PC-9 (cell line): ENCODE measurements at regions of chr17 and their contacts with region 1.

Region 1: DNA sequence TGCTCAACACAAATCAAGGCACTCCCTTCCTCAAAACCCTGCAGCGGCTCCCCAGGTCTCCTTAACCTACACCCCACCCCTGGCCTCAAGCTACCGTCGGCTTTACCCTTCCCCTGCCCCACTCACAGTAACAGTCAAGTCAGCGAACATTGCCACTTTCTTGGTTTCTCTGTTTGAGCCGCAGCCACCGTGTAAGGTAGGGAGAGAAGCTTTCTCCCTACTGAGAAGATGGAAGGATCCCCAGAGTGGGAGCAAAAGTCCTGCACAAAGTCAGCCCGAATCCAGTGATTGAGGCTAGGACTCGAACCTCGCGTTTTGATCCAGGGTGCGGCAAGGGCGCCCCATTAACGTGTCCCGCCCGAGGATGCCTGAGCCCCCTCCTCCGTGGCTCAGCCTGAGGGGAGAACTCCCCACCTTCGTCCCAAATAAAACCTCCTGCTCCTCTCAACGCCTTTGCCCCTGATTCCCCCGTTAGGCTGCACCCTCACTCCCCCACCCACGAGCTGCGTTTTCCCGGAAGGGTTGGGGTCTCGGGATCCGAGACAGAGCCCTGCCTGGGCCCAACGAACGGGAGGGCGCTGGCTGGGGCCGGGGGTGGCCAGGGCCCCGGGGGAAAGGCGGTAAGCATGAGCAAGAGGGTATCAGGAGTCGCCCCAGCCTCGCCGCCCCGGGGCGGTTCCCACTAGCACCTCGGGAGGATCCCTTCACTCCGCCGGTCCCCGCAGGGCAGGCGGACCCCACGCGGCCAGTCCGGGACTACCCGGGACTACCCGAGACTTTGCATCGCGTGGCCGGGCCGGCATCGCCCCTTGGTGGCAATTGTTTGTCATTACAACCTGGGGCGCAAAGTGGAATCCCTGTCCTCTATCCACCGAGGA is 9.9 kb upstream of the NAGS start:
- DNase-seq: peak in 1 of 2 experiments; percentile 54
- H3K4me3 ChIP-seq: no peak overlapping the region; the same call in 1 of the 2 replicates
- H3K27ac ChIP-seq: no peak overlapping the region
- H3K4me1 ChIP-seq: no peaks in the 10 kb centered on the region
- H3K27me3 ChIP-seq: peaks cover 13% of the 10 kb centered on the region
- CTCF ChIP-seq: peak; percentile 90

Region 2: GRCh38 chr17:43790311-43790940 is 204.1 kb before region 1 on chr17:
- CTCF ChIA-PET with region 1: interaction called, 14 read pairs
- POLR2A ChIA-PET with region 1: no interaction called
- intact Hi-C with region 1: no loop called
- DNase-seq: no peak
- H3K4me3 ChIP-seq: no peak overlapping the region
- H3K27ac ChIP-seq: no peak overlapping the region
- H3K4me1 ChIP-seq: no peaks in the 10 kb centered on the region; the same call in 1 of the 2 replicates
- H3K27me3 ChIP-seq: peaks cover 12% of the 10 kb centered on the region; the same call in 1 of the 2 replicates
- CTCF ChIP-seq: peak; percentile 41; the same call in 1 of the 2 replicates

Region 3: DNA sequence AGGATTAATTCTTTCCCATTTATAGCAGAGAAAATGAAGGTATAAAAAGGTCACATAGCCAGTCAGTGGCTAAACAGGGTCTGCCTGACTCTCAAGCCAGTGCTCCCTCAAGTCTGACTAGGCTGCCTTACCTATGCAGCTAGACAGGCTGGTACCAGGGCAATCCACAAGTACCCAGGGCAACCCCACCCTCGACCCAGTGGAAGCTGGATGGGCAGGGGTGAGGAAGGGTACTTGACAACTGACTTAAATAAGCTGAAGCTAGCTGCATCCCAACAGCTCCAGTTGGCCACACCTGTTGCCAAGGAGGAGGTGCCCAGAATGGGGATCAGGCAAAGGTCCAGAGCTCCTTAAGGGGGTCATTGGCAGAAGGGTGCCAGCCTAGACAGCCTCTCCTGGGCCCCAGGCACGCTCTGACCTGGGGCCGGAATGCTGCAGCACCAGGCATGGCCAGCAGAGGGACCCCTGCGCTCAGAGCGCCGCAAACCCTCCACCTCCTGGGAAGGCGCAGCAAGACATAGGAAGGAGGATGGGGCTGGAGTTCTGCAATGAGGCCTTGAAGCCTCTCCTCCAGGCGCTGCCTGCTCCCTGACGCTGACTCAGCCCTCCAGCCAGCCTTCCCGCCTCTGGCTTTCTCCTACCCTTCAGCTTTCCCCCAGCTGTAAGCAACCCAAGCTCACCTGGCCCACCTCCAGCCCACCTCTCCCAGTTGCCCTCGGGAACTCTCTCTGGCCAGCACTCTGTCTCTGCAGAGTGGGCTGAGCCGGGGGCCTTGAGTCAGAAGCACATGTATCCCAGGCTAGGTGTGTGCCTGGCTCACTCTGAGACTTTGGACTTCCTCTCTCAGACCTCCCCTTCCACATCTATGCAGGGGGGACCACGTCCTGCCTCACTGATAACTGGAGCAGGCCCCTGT is 116.0 kb before region 1 on chr17:
- CTCF ChIA-PET with region 1: interaction called, 4 read pairs
- POLR2A ChIA-PET with region 1: no interaction called
- intact Hi-C with region 1: loop called (anchors 2 kb)
- DNase-seq: peak; percentile 73 to 84
- H3K4me3 ChIP-seq: no peak overlapping the region
- H3K27ac ChIP-seq: no peak overlapping the region
- H3K4me1 ChIP-seq: no peaks in the 10 kb centered on the region
- H3K27me3 ChIP-seq: no peaks in the 10 kb centered on the region
- CTCF ChIP-seq: peak; percentile 92

Region 4: GRCh38 chr17:43983515-43984411 is 10.7 kb before region 1 on chr17:
- CTCF ChIA-PET with region 1: interaction called, 22 read pairs
- POLR2A ChIA-PET with region 1: no interaction called
- intact Hi-C with region 1: no loop called
- DNase-seq: no peak
- H3K4me3 ChIP-seq: no peak overlapping the region
- H3K27ac ChIP-seq: no peak overlapping the region
- H3K4me1 ChIP-seq: no peaks in the 10 kb centered on the region
- H3K27me3 ChIP-seq: peaks cover 59% of the 10 kb centered on the region
- CTCF ChIP-seq: no peak